GM12878 (cell line): ENCODE measurements at regions of chr1 and their contacts with region 1.

Region 1: DNA sequence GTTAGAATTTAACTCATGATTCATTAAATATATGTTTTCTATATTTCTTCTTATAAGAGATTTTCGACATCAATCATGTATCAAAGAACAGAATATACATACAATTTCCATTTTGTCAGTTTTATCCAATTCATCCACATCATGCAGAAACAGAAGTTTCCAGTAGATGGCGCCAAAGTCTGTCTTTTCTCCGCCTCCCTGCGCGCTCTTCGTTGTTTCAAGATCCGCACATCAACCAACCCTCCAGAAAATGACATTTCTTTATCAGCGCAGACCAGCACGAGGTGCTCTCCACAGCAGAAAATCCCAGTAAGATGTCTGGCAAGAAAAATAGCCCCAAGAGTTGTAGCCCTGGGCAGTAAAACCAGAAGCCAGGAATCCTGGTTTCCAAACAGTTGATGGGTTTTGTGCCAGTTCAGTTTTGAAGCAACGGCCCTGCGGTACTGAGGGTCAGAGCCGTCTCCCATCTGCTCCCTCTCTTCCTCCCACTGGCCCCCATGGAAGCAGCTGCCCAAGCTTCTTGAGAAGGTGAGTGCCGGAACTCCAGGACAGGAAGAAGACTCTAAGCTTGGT is 38.6 kb upstream of the GPR137B start:
- DNase-seq: no peak
- ATAC-seq: peak; percentile 85
- H3K4me3 ChIP-seq: no peak overlapping the region
- H3K27ac ChIP-seq: no peak overlapping the region
- H3K4me1 ChIP-seq: no peaks in the 10 kb centered on the region
- H3K27me3 ChIP-seq: no peaks in the 10 kb centered on the region
- CTCF ChIP-seq: peak; percentile 53 to 90 (median 71)
- EP300 ChIP-seq: no peak
- POLR2A ChIP-seq: no peak
- RAD21 ChIP-seq: peak; percentile 91

Region 2: DNA sequence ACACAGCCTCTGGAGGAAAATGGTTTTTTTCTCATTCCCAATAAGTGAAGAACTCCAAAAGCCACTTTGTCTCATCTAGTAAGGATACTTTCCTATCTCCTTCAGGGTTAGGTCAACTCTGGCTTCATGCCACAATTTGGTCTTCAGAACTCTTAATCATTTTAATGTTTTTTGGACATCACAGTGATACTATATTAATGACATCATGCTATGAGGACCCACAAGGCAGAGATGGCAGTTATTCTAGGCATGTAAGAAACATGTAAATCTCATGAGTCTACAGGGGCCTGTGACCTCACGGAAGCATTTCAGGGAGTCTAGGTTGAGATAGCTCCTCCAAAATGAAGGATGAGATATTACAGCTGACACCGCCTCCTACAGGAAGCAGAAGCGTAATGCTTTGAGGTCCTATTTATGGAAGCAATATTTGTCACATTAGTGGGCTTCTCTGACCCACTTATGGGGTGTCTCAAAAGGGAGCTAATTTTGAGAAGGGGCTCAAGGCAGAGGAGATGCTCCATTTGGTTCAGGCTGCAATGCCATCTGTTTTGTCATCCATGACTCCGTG is 33.6 kb after region 1 on chr1:
- CTCF ChIA-PET with region 1: interaction called, 18 read pairs
- POLR2A ChIA-PET with region 1: interaction called, 3 read pairs
- RAD21 ChIA-PET with region 1: interaction called, 4 read pairs
- SMC1A ChIA-PET with region 1: interaction called, 4 read pairs
- in situ Hi-C with region 1: no loop called
- intact Hi-C with region 1: no loop called
- DNase-seq: no peak
- ATAC-seq: peak; percentile 10; the same call in 2 of the 3 replicates
- H3K4me3 ChIP-seq: no peak overlapping the region
- H3K27ac ChIP-seq: no peak overlapping the region
- H3K4me1 ChIP-seq: peaks cover 11% of the 10 kb centered on the region
- H3K27me3 ChIP-seq: peaks cover 1 to 13% of the 10 kb centered on the region in 2 experiments
- CTCF ChIP-seq: peak; percentile 25 to 47 (median 29); a peak in 3 of 6 replicates
- EP300 ChIP-seq: no peak
- POLR2A ChIP-seq: no peak
- RAD21 ChIP-seq: peak; percentile 62

Region 3: DNA sequence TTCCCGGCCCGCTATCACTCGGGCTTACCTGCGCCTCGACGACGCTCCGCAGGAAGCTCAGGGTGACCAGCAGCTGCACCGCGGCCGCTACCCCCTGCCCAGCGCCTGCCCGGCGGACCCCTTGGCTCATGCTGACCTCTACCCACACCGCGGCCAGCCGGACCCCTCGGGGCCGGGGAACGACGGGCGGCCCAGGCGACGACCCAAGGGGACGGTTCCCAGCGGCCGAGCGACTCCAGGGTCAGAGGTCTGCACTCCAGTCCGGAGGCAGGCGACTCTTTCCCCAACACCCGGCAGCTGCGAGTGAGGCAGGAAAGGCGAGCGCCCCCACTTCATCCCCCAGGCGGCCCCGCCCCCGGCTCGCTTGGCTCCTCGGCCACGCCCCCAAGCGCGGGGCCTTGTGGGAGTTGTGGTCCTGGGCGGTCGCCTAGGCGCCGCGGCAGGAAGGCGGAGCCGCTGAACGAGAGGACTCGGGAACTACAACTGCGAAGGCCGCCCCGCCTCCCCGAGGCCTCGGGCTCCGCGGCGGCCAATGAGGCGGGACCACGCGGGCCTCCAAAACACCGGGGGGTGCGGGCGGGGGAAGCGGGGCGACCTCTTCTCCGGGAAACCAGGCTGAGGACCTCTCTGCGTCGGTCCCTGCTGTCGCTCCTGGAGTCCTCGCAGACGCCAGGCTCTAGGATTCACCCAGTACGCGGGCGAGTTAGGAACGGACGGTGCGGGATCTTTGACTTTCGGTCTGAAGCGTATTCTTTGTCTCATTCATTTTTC is 178.1 kb after region 1 on chr1 and contains the start of gene ERO1B:
- CTCF ChIA-PET with region 1: interaction called, 3 read pairs
- POLR2A ChIA-PET with region 1: no interaction called
- RAD21 ChIA-PET with region 1: no interaction called
- SMC1A ChIA-PET with region 1: no interaction called
- in situ Hi-C with region 1: loop called (anchors 25 kb)
- intact Hi-C with region 1: no loop called
- DNase-seq: peak; percentile 73
- ATAC-seq: peak; percentile 86
- H3K4me3 ChIP-seq: peak within 1 kb of the TSS; percentile 85
- H3K27ac ChIP-seq: peak within 1 kb of the TSS; percentile 88
- H3K4me1 ChIP-seq: peaks cover 33% of the 10 kb centered on the region
- H3K27me3 ChIP-seq: no peaks in the 10 kb centered on the region
- CTCF ChIP-seq: no peak
- EP300 ChIP-seq: no peak
- POLR2A ChIP-seq: peak; percentile 99
- RAD21 ChIP-seq: no peak
- polyA plus RNA-seq, gene ERO1B: 9.0 to 9.6 TPM

Region 4: DNA sequence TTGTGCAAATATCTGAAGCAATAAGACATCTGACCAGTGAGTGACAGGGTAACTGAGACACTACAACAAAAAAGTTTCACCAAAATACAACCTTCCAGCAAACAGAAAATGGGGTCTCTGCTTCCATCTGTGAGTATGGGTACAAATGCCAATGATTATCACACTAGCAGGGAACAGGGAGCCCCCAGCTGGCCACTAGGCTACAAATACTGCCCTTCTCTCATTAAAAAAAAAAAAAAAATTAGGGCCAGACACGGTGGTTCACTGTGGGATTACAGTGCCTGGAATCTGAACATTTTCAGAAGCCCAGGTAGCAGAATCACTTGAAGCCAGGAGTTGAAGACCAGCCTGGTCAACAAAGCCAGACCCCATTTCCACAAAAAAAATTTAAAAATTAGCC is 242.0 kb after region 1 on chr1:
- CTCF ChIA-PET with region 1: interaction called, 12 read pairs
- POLR2A ChIA-PET with region 1: no interaction called
- RAD21 ChIA-PET with region 1: interaction called, 5 read pairs
- SMC1A ChIA-PET with region 1: interaction called, 3 read pairs
- in situ Hi-C with region 1: no loop called
- intact Hi-C with region 1: no loop called
- DNase-seq: no peak
- ATAC-seq: peak; percentile 74
- H3K4me3 ChIP-seq: no peak overlapping the region
- H3K27ac ChIP-seq: no peak overlapping the region
- H3K4me1 ChIP-seq: no peaks in the 10 kb centered on the region
- H3K27me3 ChIP-seq: no peaks in the 10 kb centered on the region
- CTCF ChIP-seq: peak in 2 of 3 experiments; percentile 6 to 35; a peak in 2 of 6 replicates
- EP300 ChIP-seq: no peak
- POLR2A ChIP-seq: no peak
- RAD21 ChIP-seq: peak; percentile 47; the same call in 1 of the 2 replicates

Region 5: GRCh38 chr1:236868625-236869467 is 765.1 kb after region 1 on chr1:
- CTCF ChIA-PET with region 1: interaction called, 6 read pairs
- POLR2A ChIA-PET with region 1: no interaction called
- RAD21 ChIA-PET with region 1: no interaction called
- SMC1A ChIA-PET with region 1: interaction called, 9 read pairs
- in situ Hi-C with region 1: loop called (anchors 5 kb)
- intact Hi-C with region 1: loop called (anchors 5 kb)
- DNase-seq: peak; percentile 17
- ATAC-seq: peak; percentile 97
- H3K4me3 ChIP-seq: no peak overlapping the region
- H3K27ac ChIP-seq: no peak overlapping the region
- H3K4me1 ChIP-seq: no peaks in the 10 kb centered on the region
- H3K27me3 ChIP-seq: no peaks in the 10 kb centered on the region
- CTCF ChIP-seq: peak; percentile 84 to 94 (median 90)
- EP300 ChIP-seq: no peak
- POLR2A ChIP-seq: no peak
- RAD21 ChIP-seq: peak; percentile 67

Region 6: DNA sequence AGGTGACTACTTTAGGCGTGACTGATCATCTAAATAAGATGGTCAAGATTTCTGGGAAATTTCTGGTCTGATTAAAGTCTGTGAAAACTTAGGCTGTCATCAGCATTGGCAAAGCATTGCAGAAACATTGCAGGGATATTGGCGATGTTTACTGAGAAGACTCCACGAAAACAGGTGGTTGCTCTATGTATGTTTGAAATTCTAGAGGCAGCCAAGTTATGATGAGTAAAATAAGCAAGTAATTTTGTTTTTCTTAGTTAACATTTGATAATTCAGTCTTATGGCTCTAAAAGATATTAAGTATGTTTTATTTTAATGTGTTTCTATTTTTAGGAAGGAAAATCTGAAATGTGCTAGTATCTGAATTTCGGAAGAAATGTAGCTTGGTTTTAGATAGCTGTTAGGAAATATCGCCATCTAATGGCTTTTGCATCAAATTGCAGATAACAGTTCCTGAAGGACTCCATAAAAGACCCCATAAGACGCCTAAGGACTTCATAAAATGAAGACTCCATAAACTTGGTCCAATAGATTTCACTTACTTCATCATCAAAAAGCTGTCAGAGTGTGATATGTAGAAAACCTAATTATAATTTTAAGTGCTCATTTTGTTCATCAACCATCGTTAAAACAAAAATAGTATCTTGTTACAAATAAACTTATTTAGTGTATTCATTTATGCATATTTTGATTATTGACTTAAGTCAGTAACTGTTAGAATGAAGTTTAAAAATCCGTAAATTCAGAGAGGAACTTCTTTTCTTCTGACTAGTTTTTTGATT is 1282.8 kb after region 1 on chr1:
- CTCF ChIA-PET with region 1: no interaction called
- POLR2A ChIA-PET with region 1: no interaction called
- RAD21 ChIA-PET with region 1: no interaction called
- SMC1A ChIA-PET with region 1: no interaction called
- in situ Hi-C with region 1: loop called (anchors 10 kb)
- intact Hi-C with region 1: loop called (anchors 5 kb)
- DNase-seq: no peak
- ATAC-seq: peak; percentile 58
- H3K4me3 ChIP-seq: no peak overlapping the region
- H3K27ac ChIP-seq: no peak overlapping the region
- H3K4me1 ChIP-seq: no peaks in the 10 kb centered on the region
- H3K27me3 ChIP-seq: no peaks in the 10 kb centered on the region
- CTCF ChIP-seq: peak; percentile 46 to 61 (median 55); a peak in 5 of 6 replicates
- EP300 ChIP-seq: no peak
- POLR2A ChIP-seq: no peak
- RAD21 ChIP-seq: peak; percentile 63